Mammary epithelial cell (primary cell): ENCODE measurements at regions of chr15 and their contacts with region 1.

Region 1: DNA sequence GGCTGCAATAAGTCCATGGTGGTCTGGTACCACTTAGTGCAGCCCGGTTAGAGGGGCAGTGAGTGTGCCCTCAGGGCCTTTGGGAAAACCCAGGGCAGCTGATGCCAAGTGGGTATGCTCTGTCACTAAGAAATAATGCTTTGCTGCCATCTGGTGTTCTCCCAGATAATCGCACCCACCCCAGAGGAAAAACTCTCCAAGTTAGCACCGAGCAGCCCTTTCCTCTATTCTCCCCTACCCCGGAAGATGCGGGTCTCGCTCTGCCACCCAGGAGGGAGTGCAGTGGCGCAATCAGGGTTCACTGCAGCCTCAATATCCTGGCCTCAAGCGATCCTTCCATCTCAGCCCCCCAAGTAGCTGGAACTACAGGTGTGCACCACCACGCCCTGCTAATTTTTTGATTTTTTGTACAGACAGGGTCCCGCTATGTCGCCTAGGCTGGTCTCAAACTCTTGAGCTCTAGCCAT is 21.3 kb upstream of the DAPK2 start:
- DNase-seq: peak; percentile 39
- H3K4me3 ChIP-seq: no peak overlapping the region
- H3K27ac ChIP-seq: no peak overlapping the region
- H3K4me1 ChIP-seq: no peaks in the 10 kb centered on the region
- H3K27me3 ChIP-seq: no peaks in the 10 kb centered on the region
- CTCF ChIP-seq: peak; percentile 59 to 82

Region 2: GRCh38 chr15:63466378-63467192 is 601.0 kb before region 1 on chr15:
- CTCF ChIA-PET with region 1: no interaction called
- dilution Hi-C with region 1: no loop called
- in situ Hi-C with region 1: loop called in 1 of 2 experiments (anchors 25 kb)
- intact Hi-C with region 1: loop called (anchors 1 kb)
- DNase-seq: peak; percentile 56
- H3K4me3 ChIP-seq: no peak overlapping the region
- H3K27ac ChIP-seq: no peak overlapping the region
- H3K4me1 ChIP-seq: no peaks in the 10 kb centered on the region
- H3K27me3 ChIP-seq: no peaks in the 10 kb centered on the region
- CTCF ChIP-seq: peak; percentile 56 to 73

Region 3: GRCh38 chr15:63610200-63610841 is 457.3 kb before region 1 on chr15:
- CTCF ChIA-PET with region 1: no interaction called
- dilution Hi-C with region 1: no loop called
- in situ Hi-C with region 1: loop called (anchors 10 to 25 kb)
- intact Hi-C with region 1: loop called (anchors 1 kb)
- DNase-seq: peak; percentile 67
- H3K4me3 ChIP-seq: no peak overlapping the region
- H3K27ac ChIP-seq: no peak overlapping the region
- H3K4me1 ChIP-seq: peaks cover under 1% of the 10 kb centered on the region
- H3K27me3 ChIP-seq: no peaks in the 10 kb centered on the region
- CTCF ChIP-seq: peak; percentile 81 to 85

Region 4: GRCh38 chr15:63833021-63833696 is 234.4 kb before region 1 on chr15:
- CTCF ChIA-PET with region 1: no interaction called
- dilution Hi-C with region 1: no loop called
- in situ Hi-C with region 1: no loop called
- intact Hi-C with region 1: loop called (anchors 5 kb)
- DNase-seq: peak; percentile 32
- H3K4me3 ChIP-seq: peak overlapping the region; percentile 71 to 98 (median 95)
- H3K27ac ChIP-seq: peak overlapping the region; percentile 80
- H3K4me1 ChIP-seq: peaks cover 12% of the 10 kb centered on the region
- H3K27me3 ChIP-seq: no peaks in the 10 kb centered on the region
- CTCF ChIP-seq: no peak

Region 5: GRCh38 chr15:63945007-63945788 is 122.4 kb before region 1 on chr15:
- CTCF ChIA-PET with region 1: no interaction called
- dilution Hi-C with region 1: no loop called
- in situ Hi-C with region 1: no loop called
- intact Hi-C with region 1: loop called (anchors 1 kb)
- DNase-seq: peak; percentile 61
- H3K4me3 ChIP-seq: no peak overlapping the region
- H3K27ac ChIP-seq: peak overlapping the region; percentile 41
- H3K4me1 ChIP-seq: peaks cover 20% of the 10 kb centered on the region
- H3K27me3 ChIP-seq: no peaks in the 10 kb centered on the region
- CTCF ChIP-seq: peak; percentile 97 to 99

Region 6: GRCh38 chr15:64004582-64004981 is 63.0 kb before region 1 on chr15:
- CTCF ChIA-PET with region 1: interaction called, 3 read pairs
- dilution Hi-C with region 1: no loop called
- in situ Hi-C with region 1: no loop called
- intact Hi-C with region 1: loop called (anchors 1 kb)
- DNase-seq: peak; percentile 96
- H3K4me3 ChIP-seq: no peak overlapping the region
- H3K27ac ChIP-seq: peak overlapping the region; percentile 12
- H3K4me1 ChIP-seq: peaks cover 38% of the 10 kb centered on the region
- H3K27me3 ChIP-seq: no peaks in the 10 kb centered on the region
- CTCF ChIP-seq: no peak